ENCODE measurements at regions of chr16 and their contacts with region 1.

Region 1: GRCh38 chr16:30698139-30698815 is 694 bp upstream of the SRCAP start:
- DNase-seq: peak; percentile 98 to 100 (median 99)
- ATAC-seq: peak; percentile 86
- H3K4me3 ChIP-seq: peak overlapping the region; percentile 86
- H3K4me3 Mint-ChIP-seq: peak overlapping the region; percentile 87 to 99 (median 97)
- H3K27ac ChIP-seq: peak overlapping the region; percentile 99
- H3K27ac Mint-ChIP-seq: peak overlapping the region; percentile 99 to 100 (median 100)
- H3K4me1 ChIP-seq: peaks cover 15 to 35% of the 10 kb centered on the region in 2 donors
- H3K4me1 Mint-ChIP-seq: peaks cover 26 to 48% (median 41%) of the 10 kb centered on the region in 7 donors
- H3K27me3 ChIP-seq: no peaks in the 10 kb centered on the region
- H3K27me3 Mint-ChIP-seq: no peaks in the 10 kb centered on the region

Region 2: GRCh38 chr16:30065143-30065850 is 633.0 kb before region 1 on chr16 and contains the start of gene ALDOA:
- CTCF ChIA-PET with region 1: no interaction called
- POLR2A ChIA-PET with region 1: interaction called, 3 read pairs
- intact Hi-C with region 1: loop called in 1 of 2 experiments (anchors 1 kb)
- DNase-seq: peak; percentile 82 to 97 (median 92)
- ATAC-seq: peak; percentile 90
- H3K4me3 ChIP-seq: peak within 1 kb of the TSS; percentile 94
- H3K4me3 Mint-ChIP-seq: peak within 1 kb of the TSS; percentile 96 to 100 (median 99)
- H3K27ac ChIP-seq: peak within 1 kb of the TSS; percentile 83
- H3K27ac Mint-ChIP-seq: peak within 1 kb of the TSS; percentile 90 to 99 (median 98)
- H3K4me1 ChIP-seq: peaks cover 13 to 37% of the 10 kb centered on the region in 2 donors
- H3K4me1 Mint-ChIP-seq: peaks cover 22 to 43% (median 35%) of the 10 kb centered on the region in 7 donors
- H3K27me3 ChIP-seq: no peaks in the 10 kb centered on the region
- H3K27me3 Mint-ChIP-seq: no peaks in the 10 kb centered on the region
- total RNA-seq, gene ALDOA: 356 to 1,619 (median 584) TPM

Region 3: GRCh38 chr16:30355144-30355894 is 343.0 kb before region 1 on chr16 and contains the start of gene CD2BP2:
- CTCF ChIA-PET with region 1: no interaction called
- POLR2A ChIA-PET with region 1: no interaction called
- intact Hi-C with region 1: no loop called
- DNase-seq: peak; percentile 75 to 91 (median 86)
- ATAC-seq: peak; percentile 92
- H3K4me3 ChIP-seq: peak within 1 kb of the TSS; percentile 82
- H3K4me3 Mint-ChIP-seq: peak within 1 kb of the TSS; percentile 90 to 100 (median 96)
- H3K27ac ChIP-seq: peak within 1 kb of the TSS; percentile 92
- H3K27ac Mint-ChIP-seq: peak within 1 kb of the TSS; percentile 95 to 99 (median 98)
- H3K4me1 ChIP-seq: peaks cover 16 to 18% of the 10 kb centered on the region in 2 donors
- H3K4me1 Mint-ChIP-seq: peaks cover 10 to 46% (median 28%) of the 10 kb centered on the region in 7 donors
- H3K27me3 ChIP-seq: no peaks in the 10 kb centered on the region
- H3K27me3 Mint-ChIP-seq: peaks cover 0 to 2% (median 0%) of the 10 kb centered on the region in 5 donors
- total RNA-seq, gene CD2BP2: 37.5 to 77.0 (median 64.6) TPM

Region 4: DNA sequence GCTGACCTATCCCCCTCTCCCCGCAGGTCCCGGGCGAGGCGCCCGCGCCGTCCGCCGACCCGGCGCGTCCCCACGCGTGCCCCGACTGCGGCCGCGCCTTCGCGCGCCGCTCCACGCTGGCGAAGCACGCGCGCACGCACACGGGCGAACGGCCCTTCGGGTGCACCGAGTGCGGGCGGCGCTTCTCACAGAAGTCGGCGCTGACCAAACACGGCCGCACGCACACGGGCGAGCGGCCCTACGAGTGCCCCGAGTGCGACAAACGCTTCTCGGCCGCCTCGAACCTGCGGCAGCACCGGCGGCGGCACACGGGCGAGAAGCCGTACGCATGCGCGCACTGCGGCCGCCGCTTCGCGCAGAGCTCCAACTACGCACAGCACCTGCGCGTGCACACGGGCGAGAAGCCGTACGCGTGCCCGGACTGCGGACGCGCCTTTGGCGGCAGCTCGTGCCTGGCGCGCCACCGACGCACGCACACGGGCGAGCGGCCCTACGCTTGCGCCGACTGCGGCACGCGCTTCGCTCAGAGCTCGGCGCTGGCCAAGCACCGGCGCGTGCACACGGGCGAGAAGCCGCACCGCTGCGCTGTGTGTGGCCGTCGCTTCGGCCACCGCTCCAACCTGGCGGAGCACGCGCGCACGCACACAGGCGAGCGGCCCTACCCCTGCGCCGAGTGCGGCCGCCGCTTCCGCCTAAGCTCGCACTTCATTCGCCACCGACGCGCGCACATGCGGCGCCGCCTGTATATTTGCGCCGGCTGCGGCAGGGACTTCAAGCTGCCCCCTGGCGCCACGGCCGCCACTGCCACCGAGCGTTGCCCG is 280.5 kb before region 1 on chr16:
- CTCF ChIA-PET with region 1: no interaction called
- POLR2A ChIA-PET with region 1: interaction called, 4 read pairs
- intact Hi-C with region 1: loop called in 1 of 2 experiments (anchors 2 kb)
- DNase-seq: peak; percentile 79 to 93 (median 88)
- ATAC-seq: peak; percentile 95
- H3K4me3 ChIP-seq: peak overlapping the region; percentile 76
- H3K4me3 Mint-ChIP-seq: peak overlapping the region; percentile 54 to 80 (median 70)
- H3K27ac ChIP-seq: peak overlapping the region; percentile 85
- H3K27ac Mint-ChIP-seq: peak overlapping the region in 7 of 9 donors; percentile 69 to 88 (median 81)
- H3K4me1 ChIP-seq: peaks cover 6 to 8% of the 10 kb centered on the region in 2 donors
- H3K4me1 Mint-ChIP-seq: peaks cover 12 to 31% (median 14%) of the 10 kb centered on the region in 7 donors
- H3K27me3 ChIP-seq: no peaks in the 10 kb centered on the region
- H3K27me3 Mint-ChIP-seq: no peaks in the 10 kb centered on the region

Region 5: DNA sequence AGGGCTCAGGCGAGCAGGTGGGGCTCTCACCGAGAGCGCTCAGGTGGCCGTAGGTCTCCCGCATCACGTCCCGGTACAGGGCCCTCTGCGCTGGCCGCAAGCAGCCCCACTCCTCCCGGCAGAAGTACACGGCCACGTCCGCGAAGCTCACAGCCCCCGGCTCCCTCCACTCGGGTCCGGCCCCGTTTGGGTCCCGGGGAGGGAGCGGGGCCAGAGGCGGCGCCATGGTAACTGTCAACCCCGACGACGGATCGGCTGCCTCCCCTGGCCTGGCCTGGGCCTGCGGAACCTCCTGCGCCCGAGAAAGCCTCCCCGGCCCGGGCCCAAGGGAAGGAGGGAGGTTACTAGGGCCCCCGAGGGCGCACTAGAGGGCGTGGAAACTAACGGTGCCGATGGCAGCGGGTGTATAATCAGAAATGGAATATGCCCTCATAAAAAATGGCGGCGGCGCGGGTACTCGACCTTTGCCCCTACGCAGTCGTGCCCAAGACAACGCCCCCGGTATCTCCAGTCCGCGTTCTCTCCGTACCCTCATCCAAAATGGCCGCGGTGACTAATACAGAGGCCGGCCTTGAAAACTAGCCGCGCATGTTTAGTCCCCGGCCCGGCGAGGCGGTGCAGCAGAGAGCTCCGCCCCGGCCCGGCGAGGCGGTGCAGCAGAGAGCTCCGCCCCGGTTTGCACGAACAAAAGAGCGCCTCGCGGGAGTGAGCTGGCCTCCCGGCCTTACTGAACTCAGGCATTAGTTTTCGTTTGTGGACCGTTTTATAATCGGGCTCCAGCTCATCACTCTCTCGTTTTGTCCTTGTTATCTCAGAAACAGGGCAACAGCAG is 140.1 kb before region 1 on chr16 and contains the start of gene ZNF764:
- CTCF ChIA-PET with region 1: interaction called, 3 read pairs
- POLR2A ChIA-PET with region 1: interaction called, 3 read pairs
- intact Hi-C with region 1: loop called in 1 of 2 experiments (anchors 1 kb)
- DNase-seq: peak; percentile 79 to 95 (median 91)
- ATAC-seq: peak; percentile 95
- H3K4me3 ChIP-seq: peak within 1 kb of the TSS; percentile 92
- H3K4me3 Mint-ChIP-seq: peak within 1 kb of the TSS; percentile 83 to 92 (median 90)
- H3K27ac ChIP-seq: peak within 1 kb of the TSS; percentile 99
- H3K27ac Mint-ChIP-seq: peak within 1 kb of the TSS; percentile 87 to 94 (median 92)
- H3K4me1 ChIP-seq: peaks cover 12 to 15% of the 10 kb centered on the region in 2 donors
- H3K4me1 Mint-ChIP-seq: peaks cover 33 to 58% (median 43%) of the 10 kb centered on the region in 7 donors
- H3K27me3 ChIP-seq: no peaks in the 10 kb centered on the region
- H3K27me3 Mint-ChIP-seq: no peaks in the 10 kb centered on the region
- total RNA-seq, gene ZNF764: 11.9 to 20.9 (median 19.3) TPM

Region 6: GRCh38 chr16:30628627-30629540 is 69.4 kb before region 1 on chr16:
- CTCF ChIA-PET with region 1: interaction called, 5 read pairs
- POLR2A ChIA-PET with region 1: interaction called, 4 read pairs
- intact Hi-C with region 1: loop called (anchors 1 kb)
- DNase-seq: peak; percentile 64 to 89 (median 80)
- ATAC-seq: peak; percentile 97
- H3K4me3 ChIP-seq: peak overlapping the region; percentile 51
- H3K4me3 Mint-ChIP-seq: peak overlapping the region; percentile 58 to 85 (median 72)
- H3K27ac ChIP-seq: peak overlapping the region; percentile 60
- H3K27ac Mint-ChIP-seq: peak overlapping the region in 8 of 9 donors; percentile 58 to 89 (median 80)
- H3K4me1 ChIP-seq: peaks cover 0 to 3% of the 10 kb centered on the region in 2 donors
- H3K4me1 Mint-ChIP-seq: peaks cover 4 to 12% (median 8%) of the 10 kb centered on the region in 7 donors
- H3K27me3 ChIP-seq: no peaks in the 10 kb centered on the region
- H3K27me3 Mint-ChIP-seq: peaks cover 0 to under 1% (median 0%) of the 10 kb centered on the region in 5 donors

Region 7: DNA sequence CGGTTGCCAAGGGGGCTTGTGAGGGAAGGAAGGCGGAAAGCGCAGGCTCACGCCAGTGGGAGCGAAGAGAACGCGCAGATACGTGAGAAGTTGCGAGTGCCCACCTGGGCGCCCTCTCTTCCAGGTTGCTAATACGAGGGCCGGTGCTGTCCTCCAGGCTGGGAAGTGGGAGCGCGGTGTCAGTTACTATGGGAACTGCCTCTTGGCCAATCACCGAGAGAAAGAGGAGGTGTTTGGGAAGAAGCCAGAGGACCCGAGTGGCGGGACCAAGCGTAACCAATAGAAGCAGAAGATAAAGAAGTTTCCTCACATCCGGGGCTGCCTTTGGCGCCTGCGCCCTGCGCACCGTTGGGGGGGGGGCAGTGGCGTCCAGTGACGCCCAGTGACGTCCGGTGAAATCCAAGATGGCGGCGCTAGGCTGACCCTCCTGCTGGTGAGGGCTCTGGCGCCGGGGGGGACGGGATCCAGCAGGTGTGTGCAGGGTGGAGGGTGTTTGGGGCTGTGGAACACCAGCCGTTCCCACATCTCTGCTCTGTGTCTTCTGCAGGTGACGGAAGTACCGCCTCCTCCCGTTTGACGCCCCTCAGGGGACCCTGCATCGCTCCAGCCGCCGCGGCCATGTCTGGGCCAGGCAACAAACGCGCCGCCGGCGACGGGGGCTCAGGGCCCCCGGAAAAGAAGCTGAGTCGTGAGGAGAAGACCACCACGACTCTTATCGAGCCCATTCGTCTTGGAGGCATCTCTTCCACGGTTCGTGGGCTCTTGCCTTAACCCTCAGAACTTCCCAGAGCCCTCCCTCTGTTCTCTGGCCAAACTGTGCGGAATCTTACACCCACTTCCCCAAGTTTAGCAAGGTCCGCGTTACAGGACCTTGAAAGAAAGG is 63.9 kb after region 1 on chr16 and contains the starts of genes CFAP119 and RNF40:
- CTCF ChIA-PET with region 1: no interaction called
- POLR2A ChIA-PET with region 1: no interaction called
- intact Hi-C with region 1: loop called in 1 of 2 experiments (anchors 1 kb)
- DNase-seq: peak; percentile 73 to 97 (median 88)
- ATAC-seq: peak; percentile 96
- H3K4me3 ChIP-seq: peak within 1 kb of the TSS; percentile 99
- H3K4me3 Mint-ChIP-seq: peak within 1 kb of the TSS; percentile 96 to 98 (median 97)
- H3K27ac ChIP-seq: peak within 1 kb of the TSS; percentile 88
- H3K27ac Mint-ChIP-seq: peak within 1 kb of the TSS; percentile 82 to 96 (median 93)
- H3K4me1 ChIP-seq: peaks cover 17 to 31% of the 10 kb centered on the region in 2 donors
- H3K4me1 Mint-ChIP-seq: peaks cover 21 to 41% (median 32%) of the 10 kb centered on the region in 7 donors
- H3K27me3 ChIP-seq: no peaks in the 10 kb centered on the region
- H3K27me3 Mint-ChIP-seq: no peaks in the 10 kb centered on the region
- total RNA-seq, gene CFAP119: 2.3 to 5.9 (median 2.9) TPM
- total RNA-seq, gene RNF40: 68.7 to 122 (median 114) TPM

Region 8: GRCh38 chr16:30902029-30902972 is 204.0 kb after region 1 on chr16:
- CTCF ChIA-PET with region 1: no interaction called
- POLR2A ChIA-PET with region 1: no interaction called
- intact Hi-C with region 1: no loop called
- DNase-seq: peak in 8 of 9 donors; percentile 38 to 76 (median 61)
- ATAC-seq: peak; percentile 92
- H3K4me3 ChIP-seq: peak overlapping the region; percentile 65
- H3K4me3 Mint-ChIP-seq: peak overlapping the region; percentile 91 to 99 (median 96)
- H3K27ac ChIP-seq: peak overlapping the region; percentile 80
- H3K27ac Mint-ChIP-seq: peak overlapping the region; percentile 90 to 99 (median 98)
- H3K4me1 ChIP-seq: peaks cover 26 to 35% of the 10 kb centered on the region in 2 donors
- H3K4me1 Mint-ChIP-seq: peaks cover 18 to 43% (median 32%) of the 10 kb centered on the region in 7 donors
- H3K27me3 ChIP-seq: no peaks in the 10 kb centered on the region
- H3K27me3 Mint-ChIP-seq: no peaks in the 10 kb centered on the region

Region 9: DNA sequence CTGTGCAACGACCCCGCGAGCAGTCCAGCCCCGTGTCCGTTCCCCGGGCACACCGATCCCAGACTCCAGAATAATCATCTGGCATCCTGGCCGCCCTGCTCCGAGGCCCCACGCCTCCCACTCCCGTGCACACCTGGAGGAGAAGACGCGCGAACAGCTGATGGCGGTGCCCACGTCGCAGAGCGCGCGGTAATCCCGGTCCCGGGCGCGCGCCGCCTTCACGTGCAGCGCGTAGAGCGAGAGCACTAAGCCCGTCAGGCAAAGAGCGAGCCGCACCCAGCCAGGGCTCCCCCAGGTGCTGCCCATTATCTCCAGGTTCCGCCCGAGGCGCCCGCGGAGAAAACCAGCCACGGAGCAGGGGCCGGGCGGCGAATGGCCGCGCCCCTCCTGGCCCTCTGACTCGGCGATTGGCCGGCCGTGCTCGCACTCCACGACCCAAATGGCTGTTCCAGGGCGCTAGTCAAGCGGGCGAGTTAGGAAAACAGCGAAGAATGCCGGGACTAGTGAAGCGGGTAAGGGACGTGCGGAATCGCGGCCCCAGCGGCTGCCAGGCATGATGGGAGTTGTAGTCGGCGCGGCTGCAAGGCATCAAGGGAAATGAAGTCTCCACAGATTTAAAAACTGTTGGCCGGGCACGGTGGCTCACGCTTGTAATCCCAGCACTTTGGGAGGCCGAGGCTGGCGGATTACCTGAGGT is 396.3 kb after region 1 on chr16 and contains the start of gene VKORC1:
- CTCF ChIA-PET with region 1: no interaction called
- POLR2A ChIA-PET with region 1: no interaction called
- intact Hi-C with region 1: loop called in 1 of 2 experiments (anchors 1 kb)
- DNase-seq: peak; percentile 66 to 89 (median 88)
- ATAC-seq: peak; percentile 93
- H3K4me3 ChIP-seq: peak within 1 kb of the TSS; percentile 99
- H3K4me3 Mint-ChIP-seq: peak within 1 kb of the TSS; percentile 92 to 99 (median 94)
- H3K27ac ChIP-seq: peak within 1 kb of the TSS; percentile 85
- H3K27ac Mint-ChIP-seq: peak within 1 kb of the TSS; percentile 67 to 95 (median 91)
- H3K4me1 ChIP-seq: peaks cover 14 to 18% of the 10 kb centered on the region in 2 donors
- H3K4me1 Mint-ChIP-seq: peaks cover 14 to 42% (median 29%) of the 10 kb centered on the region in 7 donors
- H3K27me3 ChIP-seq: no peaks in the 10 kb centered on the region
- H3K27me3 Mint-ChIP-seq: no peaks in the 10 kb centered on the region
- total RNA-seq, gene VKORC1: 29.5 to 69.3 (median 35.6) TPM

Measured in naive thymus-derived CD4-positive, alpha-beta T cell (primary cell).